Activated CD8-positive, alpha-beta T cell treated with anti-CD3 and anti-CD28 coated beads, Interleukin-2, amount 10 ng/mL, durations not matched to agents 7 days and 5 days (primary cell): ENCODE measurements at regions of chr17 and their contacts with region 1.

Region 1: GRCh38 chr17:2380226-2380922 is 20.5 kb downstream of the MNT start:
- DNase-seq: no peak
- ATAC-seq: no peak
- H3K4me3 Mint-ChIP-seq: no peak overlapping the region
- H3K27ac Mint-ChIP-seq: no peak overlapping the region
- H3K4me1 Mint-ChIP-seq: peaks cover 3% of the 10 kb centered on the region
- H3K27me3 Mint-ChIP-seq: no peaks in the 10 kb centered on the region

Region 2: DNA sequence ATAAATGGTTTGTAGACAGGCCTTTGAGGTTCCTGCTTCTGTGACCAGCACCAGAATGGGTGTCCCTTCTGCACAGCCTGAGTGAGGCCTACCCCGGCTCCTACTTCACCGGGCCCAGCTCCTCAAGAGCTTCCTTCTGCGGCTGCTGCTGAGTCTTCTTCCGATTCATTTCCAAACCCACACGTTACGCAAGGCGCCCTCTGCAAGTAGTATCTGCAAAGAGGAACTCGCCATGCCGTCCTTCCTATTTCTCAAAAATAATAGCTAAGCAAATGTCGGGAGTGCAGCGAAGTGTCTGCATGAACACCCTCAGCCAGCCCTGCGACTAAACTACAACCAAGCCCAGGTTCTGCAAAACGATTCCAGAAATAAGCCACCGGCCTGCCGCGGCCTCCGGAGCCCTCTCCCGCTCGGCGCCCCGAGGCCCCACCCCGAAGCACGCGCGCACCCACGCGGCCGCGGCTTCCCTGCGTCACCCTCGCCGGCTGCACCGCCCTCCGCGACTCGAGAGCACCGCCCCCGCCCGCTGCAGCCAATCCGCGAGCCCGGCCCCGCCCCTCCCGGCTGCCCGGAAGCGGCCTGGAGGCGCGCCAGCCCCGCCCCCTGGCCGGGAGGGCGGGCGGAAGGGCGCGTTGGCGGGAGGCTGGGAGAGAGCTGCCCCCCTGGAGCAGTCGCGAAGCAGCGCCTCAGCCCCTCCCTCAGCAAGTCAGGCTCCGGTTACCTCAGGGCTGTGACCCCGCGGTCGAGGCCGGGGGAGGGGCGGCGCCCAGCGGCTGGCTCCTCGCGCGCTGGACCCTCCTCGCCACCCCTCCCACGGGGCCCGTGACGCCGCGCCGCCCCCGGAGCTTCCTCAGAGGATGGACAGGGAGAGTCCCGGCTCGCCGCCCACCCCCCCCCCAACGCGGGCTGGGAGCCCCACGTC is 12.1 kb after region 1 on chr17:
- CTCF ChIA-PET with region 1: interaction called, 95 read pairs
- POLR2A ChIA-PET with region 1: interaction called, 35 read pairs
- DNase-seq: peak; percentile 97
- ATAC-seq: peak; percentile 66
- H3K4me3 Mint-ChIP-seq: peak overlapping the region; percentile 87
- H3K27ac Mint-ChIP-seq: peak overlapping the region; percentile 95
- H3K4me1 Mint-ChIP-seq: peaks cover 72% of the 10 kb centered on the region
- H3K27me3 Mint-ChIP-seq: no peaks in the 10 kb centered on the region

Region 3: GRCh38 chr17:2401426-2402221 is 21.2 kb after region 1 on chr17:
- CTCF ChIA-PET with region 1: interaction called, 112 read pairs
- POLR2A ChIA-PET with region 1: interaction called, 21 read pairs
- DNase-seq: peak; percentile 100
- ATAC-seq: peak; percentile 62
- H3K4me3 Mint-ChIP-seq: peak overlapping the region; percentile 94
- H3K27ac Mint-ChIP-seq: peak overlapping the region; percentile 100
- H3K4me1 Mint-ChIP-seq: peaks cover 55% of the 10 kb centered on the region
- H3K27me3 Mint-ChIP-seq: no peaks in the 10 kb centered on the region

Region 4: GRCh38 chr17:2547176-2547575 is 166.8 kb after region 1 on chr17:
- CTCF ChIA-PET with region 1: no interaction called
- POLR2A ChIA-PET with region 1: no interaction called
- DNase-seq: no peak
- ATAC-seq: no peak
- H3K4me3 Mint-ChIP-seq: no peak overlapping the region
- H3K27ac Mint-ChIP-seq: no peak overlapping the region
- H3K4me1 Mint-ChIP-seq: peaks cover 5% of the 10 kb centered on the region
- H3K27me3 Mint-ChIP-seq: no peaks in the 10 kb centered on the region